KBM-7 (cell line): ENCODE measurements at regions of chr7 and their contacts with region 1.

Region 1: DNA sequence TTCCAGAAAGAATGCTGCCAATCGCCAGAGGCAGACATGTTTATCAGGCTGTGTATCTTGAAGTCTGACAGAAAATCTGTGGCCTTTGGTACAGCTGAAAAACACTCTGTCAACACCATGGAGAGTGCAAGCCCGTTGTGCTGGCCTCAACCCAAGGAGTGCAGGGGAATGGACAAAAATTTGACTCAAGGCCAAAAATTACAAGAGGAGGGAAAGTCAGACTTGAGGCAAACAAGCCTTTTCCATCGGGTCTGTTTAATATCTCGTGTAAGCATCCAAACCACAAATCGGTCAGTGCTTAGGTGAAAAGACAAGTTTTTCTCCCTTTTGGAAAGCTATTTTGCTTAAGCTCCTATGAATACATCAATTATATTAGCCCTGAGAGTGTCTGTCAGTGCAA is 305.3 kb upstream of the NFE2L3 start:
- DNase-seq: no peak

Region 2: GRCh38 chr7:25408012-25408687 is 438.6 kb before region 1 on chr7:
- in situ Hi-C with region 1: loop called (anchors 25 kb)
- DNase-seq: no peak

Region 3: GRCh38 chr7:25597946-25598345 is 248.8 kb before region 1 on chr7:
- in situ Hi-C with region 1: loop called (anchors 25 kb)
- DNase-seq: no peak

Region 4: DNA sequence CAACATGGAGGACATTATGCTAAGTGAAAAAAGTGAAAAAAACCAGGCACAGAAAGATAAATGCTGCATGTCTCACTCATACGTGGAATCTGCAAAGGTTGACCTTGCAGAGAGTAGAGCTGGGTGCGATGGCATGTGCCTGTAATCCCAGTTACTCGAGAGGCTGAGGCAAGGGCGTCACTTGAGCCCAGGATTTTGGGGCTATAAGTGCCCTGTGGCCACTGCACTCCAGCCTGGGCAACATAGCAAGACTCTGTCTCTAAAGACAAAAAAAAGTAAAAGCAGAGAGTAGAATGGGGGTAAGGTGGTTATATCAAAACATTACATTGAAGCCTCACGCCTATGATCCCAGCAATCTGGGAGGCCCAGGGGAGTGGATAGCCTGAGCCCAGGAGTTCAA is 377.6 kb after region 1 on chr7:
- in situ Hi-C with region 1: no loop called
- DNase-seq: no peak